KBM-7 (cell line): ENCODE measurements at regions of chr6 and their contacts with region 1.

Region 1: DNA sequence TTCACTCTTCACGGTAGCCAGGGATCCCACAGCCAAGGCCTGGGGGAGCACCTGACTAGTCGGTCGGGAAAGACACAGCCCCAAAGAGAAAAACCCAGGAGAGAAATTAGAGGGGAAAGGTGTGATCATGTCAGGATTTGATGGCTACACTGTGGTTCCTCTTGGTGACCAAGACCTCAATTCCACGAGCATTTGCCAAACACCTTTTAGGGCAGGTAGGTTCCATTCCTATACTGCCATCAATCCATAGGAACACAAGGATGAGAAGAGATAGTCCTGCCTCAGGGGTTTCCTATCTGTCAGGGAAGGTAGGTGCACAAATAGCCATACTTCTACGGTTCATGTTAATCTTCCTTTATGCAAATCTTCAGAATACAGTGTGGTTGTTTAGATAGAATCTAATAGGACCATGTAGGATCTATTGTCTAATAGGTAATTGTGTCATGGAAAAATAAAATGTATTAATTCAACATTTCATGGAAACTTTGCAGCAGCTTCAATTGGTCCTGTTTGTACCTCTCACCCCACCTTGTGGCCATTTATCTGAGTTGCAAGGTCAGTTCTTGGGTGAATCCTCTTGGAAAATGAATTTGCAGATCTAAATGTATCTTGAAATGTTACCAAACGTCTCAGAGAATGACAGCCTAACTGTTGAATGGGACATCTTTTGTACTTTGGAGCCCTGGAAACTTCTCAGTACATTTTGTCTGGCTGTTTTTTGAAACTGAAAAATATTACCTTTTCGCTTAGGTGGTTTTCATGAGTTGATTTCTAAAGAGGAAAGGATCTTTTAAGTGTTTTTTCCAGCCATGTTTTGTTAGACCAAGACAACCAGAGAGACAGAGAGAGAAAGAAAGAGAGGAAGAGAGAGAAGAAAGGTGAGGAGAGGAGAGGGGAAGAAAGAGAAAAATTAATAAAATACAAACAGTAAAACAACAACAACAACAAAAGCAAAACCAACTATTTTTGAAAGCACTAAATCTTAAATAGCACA is 33.7 kb upstream of the IYD start:
- DNase-seq: peak; percentile 75

Region 2: GRCh38 chr6:150079604-150080003 is 255.5 kb before region 1 on chr6:
- in situ Hi-C with region 1: loop called (anchors 10 kb)
- DNase-seq: no peak